Activated T-helper 1 cell treated with anti-CD3 and anti-CD28 coated beads, Interleukin-12 subunit alpha, Interleukin-12 subunit beta, Interleukin-2, Interleukin-4 antibody, amounts not matched to agents 30 ng/mL and 10 ng/mL and 1 ng/mL, durations not matched to agents 14 hours and 24 hours and 36 hours (primary cell): ENCODE measurements at regions of chr6 and their contacts with region 1.

Region 1: GRCh38 chr6:106114492-106115265 is 28.5 kb downstream of the PRDM1 start:
- DNase-seq: peak; percentile 47
- H3K4me3 Mint-ChIP-seq: peak overlapping the region; percentile 58
- H3K27ac Mint-ChIP-seq: peak overlapping the region; percentile 82
- H3K4me1 Mint-ChIP-seq: peaks cover 93% of the 10 kb centered on the region
- H3K27me3 Mint-ChIP-seq: peaks cover 2% of the 10 kb centered on the region

Region 2: DNA sequence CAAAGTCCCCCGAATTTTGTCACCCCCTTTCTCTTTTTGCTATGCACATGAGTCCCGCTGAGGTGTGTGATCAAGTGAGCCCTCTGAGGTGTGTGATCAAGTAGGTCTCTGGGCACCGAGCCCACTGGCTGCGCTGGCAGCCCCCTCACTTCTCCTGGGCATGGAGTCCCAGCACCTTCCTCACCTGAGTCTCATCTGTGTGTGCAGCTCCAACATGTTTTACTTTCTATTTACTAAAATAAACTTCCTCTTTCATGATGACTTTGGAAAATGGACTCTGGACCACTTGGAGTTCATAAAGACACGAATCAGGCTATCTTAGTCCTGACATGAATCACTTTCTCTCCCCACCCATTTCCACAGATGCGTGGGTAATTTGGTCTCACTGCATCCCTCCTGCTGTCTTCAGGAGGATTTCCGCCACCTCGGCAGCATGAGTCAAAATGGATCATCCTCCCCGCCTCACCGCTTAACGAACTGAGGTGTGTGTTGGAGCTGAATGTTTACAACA is 11.3 kb after region 1 on chr6:
- intact Hi-C with region 1: loop called (anchors 1 kb)
- DNase-seq: peak; percentile 34
- H3K4me3 Mint-ChIP-seq: peak overlapping the region; percentile 52
- H3K27ac Mint-ChIP-seq: peak overlapping the region; percentile 83
- H3K4me1 Mint-ChIP-seq: peaks cover 53% of the 10 kb centered on the region
- H3K27me3 Mint-ChIP-seq: peaks cover 5% of the 10 kb centered on the region

Region 3: GRCh38 chr6:106141441-106142237 is 27.0 kb after region 1 on chr6:
- intact Hi-C with region 1: loop called (anchors 1 kb)
- DNase-seq: peak; percentile 51
- H3K4me3 Mint-ChIP-seq: peak overlapping the region; percentile 59
- H3K27ac Mint-ChIP-seq: peak overlapping the region; percentile 90
- H3K4me1 Mint-ChIP-seq: peaks cover 70% of the 10 kb centered on the region
- H3K27me3 Mint-ChIP-seq: no peaks in the 10 kb centered on the region